Left ventricle myocardium superior (tissue), 1 donor: ENCODE measurements at regions of chr3 and their contacts with region 1.

Region 1: GRCh38 chr3:38651154-38651789 is 1.8 kb upstream of the SCN5A start:
- DNase-seq: peak; percentile 80
- ATAC-seq: peak; percentile 46

Region 2: GRCh38 chr3:38496131-38496910 is 155.0 kb before region 1 on chr3 and contains the start of gene EXOG:
- intact Hi-C with region 1: loop called (anchors 10 kb)
- DNase-seq: peak; percentile 95
- ATAC-seq: peak; percentile 89
- total RNA-seq, gene EXOG: 27.0 TPM

Region 3: DNA sequence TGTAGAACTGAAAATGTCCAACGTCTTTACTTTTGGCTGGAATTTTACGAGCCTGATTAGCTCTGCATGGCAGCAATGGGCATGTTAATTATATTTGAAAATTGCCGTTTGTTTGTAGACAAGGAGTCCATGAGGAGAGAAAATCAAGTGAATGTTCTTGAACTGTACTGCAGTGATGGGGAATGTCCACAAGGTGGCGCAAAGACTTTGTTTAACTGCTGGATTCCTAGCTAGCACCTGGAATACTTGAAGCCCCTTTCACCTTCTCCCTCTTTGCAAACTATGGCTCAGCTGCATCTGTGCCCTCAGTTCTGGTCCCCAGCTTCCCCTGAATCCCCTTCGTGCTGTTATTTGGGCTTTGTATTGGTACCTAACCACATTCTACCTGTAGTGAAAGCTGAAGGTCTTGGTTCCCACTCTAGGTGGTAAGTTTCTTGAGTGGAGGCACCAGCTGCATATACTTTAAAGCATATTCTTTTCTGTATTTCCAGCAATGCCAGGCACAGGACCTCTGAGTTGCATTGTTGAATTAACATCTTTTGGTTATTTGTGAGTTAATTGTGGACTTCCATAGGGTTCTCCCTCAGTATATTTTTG is 129.8 kb before region 1 on chr3:
- intact Hi-C with region 1: loop called (anchors 10 kb)
- DNase-seq: peak; percentile 51
- ATAC-seq: peak; percentile 78